Aorta (tissue), 5 donors: ENCODE measurements at regions of chr15 and their contacts with region 1.

Region 1: GRCh38 chr15:75453703-75454470 is 2.4 kb upstream of the SIN3A start:
- DNase-seq: peak; percentile 98 to 99
- ATAC-seq: peak; percentile 84
- H3K4me3 ChIP-seq: peak overlapping the region; percentile 93 to 95
- H3K27ac ChIP-seq: peak overlapping the region; percentile 84 to 99
- H3K4me1 ChIP-seq: no peaks in the 10 kb centered on the region
- H3K27me3 ChIP-seq: no peaks in the 10 kb centered on the region

Region 2: DNA sequence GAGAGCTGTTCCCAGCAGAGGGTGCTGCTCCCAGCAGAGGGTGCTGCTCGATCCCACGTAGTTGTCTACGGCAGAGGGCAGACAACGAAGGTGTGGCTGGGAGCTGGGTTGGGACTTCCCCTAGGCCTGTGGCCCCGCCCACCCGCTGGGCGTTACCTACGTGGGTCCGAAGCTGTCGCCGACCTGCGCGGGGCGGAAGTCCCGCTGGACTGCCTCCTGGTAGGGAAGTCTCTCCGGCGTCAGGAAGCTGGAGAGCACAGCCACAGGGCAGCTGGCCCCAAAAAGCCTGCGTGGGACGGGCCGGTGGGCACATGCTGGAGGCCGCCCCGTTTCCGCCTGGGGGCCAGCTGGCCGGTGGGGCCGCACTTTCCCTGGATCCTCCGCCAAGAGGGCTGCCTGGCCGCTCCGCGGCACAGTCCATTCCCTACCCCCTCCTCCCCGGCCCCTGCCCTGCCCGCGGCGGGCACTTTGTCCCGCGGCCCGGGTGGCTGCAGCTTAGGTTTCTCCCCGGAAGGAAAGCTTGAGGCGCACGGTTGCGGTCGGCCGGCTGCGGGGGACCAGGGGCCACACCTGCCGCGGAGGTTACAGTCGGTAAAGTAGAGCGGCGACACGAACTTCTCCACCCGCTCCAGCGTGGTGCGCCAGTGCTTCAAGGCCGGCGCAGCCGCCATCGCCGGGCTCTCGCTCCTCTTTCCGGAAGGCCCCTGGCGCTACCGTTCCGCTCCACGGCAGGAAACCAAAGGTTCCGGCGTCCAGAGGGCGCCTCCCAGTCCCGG is 85.8 kb before region 1 on chr15 and contains the start of gene MAN2C1:
- intact Hi-C with region 1: loop called in 1 of 2 experiments (anchors 5 kb)
- DNase-seq: peak; percentile 96 to 98
- ATAC-seq: peak; percentile 96
- H3K4me3 ChIP-seq: peak within 1 kb of the TSS; percentile 59 to 70
- H3K27ac ChIP-seq: peak within 1 kb of the TSS; percentile 1 to 90
- H3K4me1 ChIP-seq: no peaks in the 10 kb centered on the region
- H3K27me3 ChIP-seq: no peaks in the 10 kb centered on the region
- total RNA-seq, gene MAN2C1: 198 to 257 TPM

Region 3: GRCh38 chr15:75397494-75397893 is 56.4 kb before region 1 on chr15:
- intact Hi-C with region 1: no loop called
- DNase-seq: no peak
- ATAC-seq: no peak
- H3K4me3 ChIP-seq: no peak overlapping the region
- H3K27ac ChIP-seq: no peak overlapping the region
- H3K4me1 ChIP-seq: no peaks in the 10 kb centered on the region
- H3K27me3 ChIP-seq: no peaks in the 10 kb centered on the region

Region 4: GRCh38 chr15:75578948-75579920 is 125.3 kb after region 1 on chr15 and contains the start of gene PTPN9:
- intact Hi-C with region 1: loop called in 1 of 2 experiments (anchors 5 kb)
- DNase-seq: peak; percentile 86 to 93
- ATAC-seq: peak; percentile 90
- H3K4me3 ChIP-seq: peak within 1 kb of the TSS; percentile 38 to 99
- H3K27ac ChIP-seq: peak within 1 kb of the TSS; percentile 50 to 70
- H3K4me1 ChIP-seq: no peaks in the 10 kb centered on the region
- H3K27me3 ChIP-seq: no peaks in the 10 kb centered on the region
- total RNA-seq, gene PTPN9: 25.0 to 37.9 TPM